Calu3 (cell line): ENCODE measurements at regions of chr5 and their contacts with region 1.

Region 1: GRCh38 chr5:61746831-61747575 is 414.9 kb downstream of the ZSWIM6 start:
- DNase-seq: no peak
- H3K4me3 Mint-ChIP-seq: no peak overlapping the region
- H3K27ac Mint-ChIP-seq: no peak overlapping the region
- H3K4me1 Mint-ChIP-seq: peaks cover 9% of the 10 kb centered on the region
- H3K27me3 Mint-ChIP-seq: peaks cover 7% of the 10 kb centered on the region
- CTCF ChIP-seq: no peak

Region 2: GRCh38 chr5:61768692-61769281 is 21.8 kb after region 1 on chr5:
- CTCF ChIA-PET with region 1: interaction called, 4 read pairs
- intact Hi-C with region 1: loop called (anchors 1 kb)
- DNase-seq: peak; percentile 71
- H3K4me3 Mint-ChIP-seq: no peak overlapping the region
- H3K27ac Mint-ChIP-seq: no peak overlapping the region
- H3K4me1 Mint-ChIP-seq: peaks cover 8% of the 10 kb centered on the region
- H3K27me3 Mint-ChIP-seq: peaks cover 89% of the 10 kb centered on the region
- CTCF ChIP-seq: peak; percentile 95

Region 3: GRCh38 chr5:61796773-61797172 is 49.8 kb after region 1 on chr5:
- CTCF ChIA-PET with region 1: no interaction called
- intact Hi-C with region 1: no loop called
- DNase-seq: peak; percentile 16
- H3K4me3 Mint-ChIP-seq: no peak overlapping the region
- H3K27ac Mint-ChIP-seq: no peak overlapping the region
- H3K4me1 Mint-ChIP-seq: peaks cover 29% of the 10 kb centered on the region
- H3K27me3 Mint-ChIP-seq: no peaks in the 10 kb centered on the region
- CTCF ChIP-seq: no peak